Activated T-helper 2 cell treated with anti-CD3 and anti-CD28 coated beads, Interferon-gamma antibody, Interleukin-2, Interleukin-4, amounts not matched to agents 10 μg/mL and 5 μg/mL and 100 μg/mL, durations not matched to agents 14 hours and 24 hours and 36 hours (primary cell): ENCODE measurements at regions of chr3 and their contacts with region 1.

Region 1: GRCh38 chr3:122484985-122485384 is 29.8 kb downstream of the KPNA1 start:
- DNase-seq: no peak
- H3K4me3 Mint-ChIP-seq: no peak overlapping the region
- H3K27ac Mint-ChIP-seq: no peak overlapping the region
- H3K4me1 Mint-ChIP-seq: peaks cover 43% of the 10 kb centered on the region
- H3K27me3 Mint-ChIP-seq: no peaks in the 10 kb centered on the region

Region 2: DNA sequence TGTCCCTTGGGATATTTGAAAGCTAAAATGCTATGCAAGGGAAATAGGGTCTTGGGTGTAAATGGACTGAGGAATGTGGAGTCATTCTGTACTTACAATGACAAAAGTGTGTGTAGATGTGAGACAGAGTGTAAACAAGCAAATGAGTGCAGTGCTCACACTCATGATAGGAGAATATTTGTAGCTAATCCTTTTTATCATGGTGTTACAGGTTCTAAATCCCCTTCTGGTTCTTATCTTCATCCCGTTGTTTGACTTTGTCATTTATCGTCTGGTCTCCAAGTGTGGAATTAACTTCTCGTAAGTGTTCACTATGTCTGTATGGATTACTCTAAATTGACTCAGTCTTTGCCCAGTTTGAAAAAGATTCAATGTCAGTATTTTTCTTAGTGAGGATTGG is 560.3 kb before region 1 on chr3:
- intact Hi-C with region 1: no loop called
- DNase-seq: no peak
- H3K4me3 Mint-ChIP-seq: no peak overlapping the region
- H3K27ac Mint-ChIP-seq: no peak overlapping the region
- H3K4me1 Mint-ChIP-seq: peaks cover 2% of the 10 kb centered on the region
- H3K27me3 Mint-ChIP-seq: no peaks in the 10 kb centered on the region

Region 3: GRCh38 chr3:122427857-122428471 is 57.0 kb before region 1 on chr3:
- intact Hi-C with region 1: loop called (anchors 1 kb)
- DNase-seq: no peak
- H3K4me3 Mint-ChIP-seq: no peak overlapping the region
- H3K27ac Mint-ChIP-seq: peak overlapping the region; percentile 76
- H3K4me1 Mint-ChIP-seq: peaks cover 17% of the 10 kb centered on the region
- H3K27me3 Mint-ChIP-seq: no peaks in the 10 kb centered on the region

Region 4: DNA sequence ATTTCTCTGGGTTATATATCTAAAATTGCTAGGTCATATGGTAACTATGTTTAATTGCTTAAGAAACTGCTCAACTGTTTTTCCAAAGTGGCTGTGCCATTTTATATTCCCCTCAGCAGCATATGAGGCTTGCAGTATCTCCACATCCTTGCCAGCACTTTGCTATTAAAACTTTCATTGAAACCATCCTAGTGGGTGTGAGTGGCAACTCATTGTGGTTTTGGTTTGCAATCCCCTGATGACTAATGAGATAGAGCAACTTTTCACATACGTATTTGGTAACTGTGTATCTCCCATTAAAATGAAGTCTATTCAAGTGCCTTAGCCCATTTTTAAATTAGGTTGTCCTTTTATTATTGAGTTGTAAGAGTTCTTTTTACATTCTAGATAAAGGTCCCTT is 12.4 kb after region 1 on chr3:
- intact Hi-C with region 1: loop called (anchors 1 kb)
- DNase-seq: no peak
- H3K4me3 Mint-ChIP-seq: no peak overlapping the region
- H3K27ac Mint-ChIP-seq: no peak overlapping the region
- H3K4me1 Mint-ChIP-seq: peaks cover 44% of the 10 kb centered on the region
- H3K27me3 Mint-ChIP-seq: no peaks in the 10 kb centered on the region

Region 5: GRCh38 chr3:122520861-122521260 is 35.9 kb after region 1 on chr3:
- intact Hi-C with region 1: no loop called
- DNase-seq: no peak
- H3K4me3 Mint-ChIP-seq: no peak overlapping the region
- H3K27ac Mint-ChIP-seq: no peak overlapping the region
- H3K4me1 Mint-ChIP-seq: peaks cover 2% of the 10 kb centered on the region
- H3K27me3 Mint-ChIP-seq: peaks cover 5% of the 10 kb centered on the region